ENCODE measurements at regions of chr6 and their contacts with region 1.

Region 1: GRCh38 chr6:157274471-157275226 is 48.7 kb downstream of the TMEM242 start:
- DNase-seq: peak; percentile 72 to 80
- ATAC-seq: peak; percentile 88 to 96 (median 96)
- H3K4me3 ChIP-seq: peak overlapping the region; percentile 46 to 72 (median 67)
- H3K27ac ChIP-seq: peak overlapping the region; percentile 58 to 89 (median 83)
- H3K4me1 ChIP-seq: peaks cover 0 to 37% (median 7%) of the 10 kb centered on the region in 9 donors
- H3K27me3 ChIP-seq: no peaks in the 10 kb centered on the region
- CTCF ChIP-seq: peak; percentile 55 to 95 (median 90)

Region 2: GRCh38 chr6:155314092-155314772 is 1960.4 kb before region 1 on chr6 and contains the start of gene TFB1M:
- intact Hi-C with region 1: loop called in 1 of 10 experiments (anchors 10 kb)
- DNase-seq: peak; percentile 98
- ATAC-seq: peak; percentile 99 to 100 (median 99)
- H3K4me3 ChIP-seq: peak within 1 kb of the TSS; percentile 61 to 94 (median 80)
- H3K27ac ChIP-seq: peak within 1 kb of the TSS; percentile 32 to 90 (median 84)
- H3K4me1 ChIP-seq: peaks cover 0 to 28% (median 14%) of the 10 kb centered on the region in 9 donors
- H3K27me3 ChIP-seq: no peaks in the 10 kb centered on the region
- CTCF ChIP-seq: no peak
- total RNA-seq, gene TFB1M: 12.8 to 23.1 (median 17.9) TPM

Region 3: GRCh38 chr6:156686995-156687788 is 587.5 kb before region 1 on chr6:
- intact Hi-C with region 1: loop called in 1 of 10 experiments (anchors 10 kb)
- DNase-seq: peak; percentile 90 to 91
- ATAC-seq: peak; percentile 95 to 99 (median 96)
- H3K4me3 ChIP-seq: peak overlapping the region; percentile 59 to 94 (median 72)
- H3K27ac ChIP-seq: peak overlapping the region; percentile 87 to 100 (median 98)
- H3K4me1 ChIP-seq: peaks cover 0 to 19% (median 11%) of the 10 kb centered on the region in 9 donors
- H3K27me3 ChIP-seq: no peaks in the 10 kb centered on the region
- CTCF ChIP-seq: no peak

Region 4: GRCh38 chr6:157099912-157100593 is 174.6 kb before region 1 on chr6:
- intact Hi-C with region 1: no loop called
- DNase-seq: peak in 1 of 2 donors; percentile 24
- ATAC-seq: peak in 7 of 8 donors; percentile 54 to 81 (median 72)
- H3K4me3 ChIP-seq: no peak overlapping the region
- H3K27ac ChIP-seq: peak overlapping the region in 3 of 10 donors; percentile 33 to 64 (median 44)
- H3K4me1 ChIP-seq: peaks cover 0 to 39% (median 18%) of the 10 kb centered on the region in 9 donors
- H3K27me3 ChIP-seq: no peaks in the 10 kb centered on the region
- CTCF ChIP-seq: no peak

Region 5: DNA sequence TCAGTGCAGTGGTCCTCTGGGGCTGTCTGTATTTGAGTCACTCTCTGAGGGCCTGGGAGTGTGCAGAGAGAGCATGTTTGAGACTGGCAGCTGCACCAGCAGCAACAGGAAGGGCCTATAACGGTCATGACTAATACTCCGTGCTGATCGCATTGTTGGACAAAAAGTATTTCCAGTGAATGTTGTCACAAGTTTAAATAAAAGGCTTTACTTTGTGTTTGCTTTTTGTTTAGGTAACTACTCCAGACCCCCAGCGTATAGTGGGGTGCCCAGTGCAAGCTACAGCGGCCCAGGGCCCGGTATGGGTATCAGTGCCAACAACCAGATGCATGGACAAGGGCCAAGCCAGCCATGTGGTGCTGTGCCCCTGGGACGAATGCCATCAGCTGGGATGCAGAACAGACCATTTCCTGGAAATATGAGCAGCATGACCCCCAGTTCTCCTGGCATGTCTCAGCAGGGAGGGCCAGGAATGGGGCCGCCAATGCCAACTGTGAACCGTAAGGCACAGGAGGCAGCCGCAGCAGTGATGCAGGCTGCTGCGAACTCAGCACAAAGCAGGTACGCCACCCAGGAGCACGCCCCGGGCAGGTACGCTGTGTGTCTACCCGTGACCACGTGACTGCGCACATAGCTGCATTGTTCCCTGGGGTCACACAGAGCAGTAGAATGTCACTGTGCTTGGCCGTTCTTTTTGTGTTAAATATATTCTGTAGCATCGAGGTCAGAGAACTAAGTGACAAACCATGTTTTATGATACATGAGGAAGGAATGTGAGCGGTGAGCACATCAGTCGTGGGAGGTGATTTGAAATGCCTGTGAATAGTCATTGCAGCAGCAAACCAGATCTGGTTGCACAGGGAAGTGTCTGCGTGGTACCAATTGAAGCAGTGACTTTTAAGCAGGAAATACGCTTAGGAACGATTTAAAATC is 126.0 kb before region 1 on chr6:
- intact Hi-C with region 1: loop called in 1 of 10 experiments (anchors 10 kb)
- DNase-seq: peak; percentile 59 to 82
- ATAC-seq: peak; percentile 63 to 90 (median 79)
- H3K4me3 ChIP-seq: no peak overlapping the region
- H3K27ac ChIP-seq: peak overlapping the region in 9 of 10 donors; percentile 30 to 78 (median 59)
- H3K4me1 ChIP-seq: peaks cover 25 to 77% (median 68%) of the 10 kb centered on the region in 9 donors
- H3K27me3 ChIP-seq: no peaks in the 10 kb centered on the region
- CTCF ChIP-seq: no peak

Region 6: DNA sequence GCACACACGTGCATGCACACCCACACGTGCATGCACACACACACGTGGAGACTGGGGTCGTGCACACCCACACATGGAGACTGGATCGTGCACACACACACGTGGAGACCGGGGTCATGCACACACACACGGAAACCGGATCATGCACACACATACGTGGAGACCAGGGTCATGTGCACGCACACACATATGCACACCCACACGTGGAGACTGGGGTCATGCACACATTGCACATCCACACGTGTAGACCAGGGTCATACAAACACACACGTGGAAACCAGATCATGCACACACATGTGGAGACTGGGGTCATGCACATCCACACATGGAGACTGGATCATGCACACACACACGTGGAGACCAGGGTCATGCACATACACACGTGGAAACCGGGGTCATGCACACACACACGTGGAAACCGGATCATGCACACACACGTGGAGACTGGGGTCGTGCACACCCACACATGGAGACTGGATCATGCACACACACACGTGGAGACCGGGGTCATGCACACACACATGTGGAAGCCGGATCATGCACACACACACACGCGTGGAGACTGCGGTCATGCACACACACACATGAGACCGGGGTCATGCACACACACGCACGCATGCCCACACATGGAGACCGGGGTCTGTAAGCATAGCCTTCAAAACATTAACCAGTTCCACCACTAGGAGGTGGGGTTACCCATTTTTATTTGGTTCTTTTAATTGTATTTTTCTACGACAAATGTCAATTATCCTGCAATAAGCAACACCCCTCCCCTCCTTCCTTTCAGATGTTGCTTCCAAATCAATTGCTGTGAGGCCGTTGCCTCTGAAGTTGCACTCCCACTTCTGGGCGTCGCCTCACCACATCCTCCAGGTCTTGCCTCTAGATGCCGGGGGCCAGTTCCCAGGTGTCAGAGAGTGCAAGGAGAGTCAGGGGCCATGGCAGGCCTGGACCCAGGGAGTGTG is 47.2 kb before region 1 on chr6:
- intact Hi-C with region 1: loop called in 7 of 10 experiments (anchors 2 to 10 kb)
- DNase-seq: no peak
- ATAC-seq: peak in 3 of 8 donors; percentile 13 to 33 (median 16)
- H3K4me3 ChIP-seq: no peak overlapping the region
- H3K27ac ChIP-seq: peak overlapping the region in 3 of 10 donors; percentile 19 to 67 (median 34)
- H3K4me1 ChIP-seq: peaks cover 0 to 37% (median 13%) of the 10 kb centered on the region in 9 donors
- H3K27me3 ChIP-seq: no peaks in the 10 kb centered on the region
- CTCF ChIP-seq: peak in 8 of 9 donors; percentile 8 to 52 (median 37)

Region 7: DNA sequence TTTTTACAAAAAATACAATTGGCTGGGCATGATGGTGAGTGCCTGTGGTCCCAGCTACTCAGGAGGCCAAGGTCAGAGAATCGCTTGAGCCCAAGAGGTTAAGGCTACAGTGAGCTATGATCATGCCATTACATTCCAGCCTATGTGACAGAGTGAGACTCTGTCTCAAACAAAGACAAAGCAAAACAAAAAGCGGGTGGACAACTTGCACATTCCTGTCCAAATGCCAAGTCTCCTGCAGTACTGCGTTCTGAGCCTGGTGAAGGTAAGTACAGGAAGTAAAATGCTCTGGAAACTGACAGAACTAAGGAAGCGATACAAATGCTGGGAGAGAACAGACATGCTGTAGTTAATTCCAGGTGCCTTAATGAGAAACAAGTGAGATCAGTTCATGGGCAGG is 69.1 kb after region 1 on chr6:
- intact Hi-C with region 1: no loop called
- DNase-seq: no peak
- ATAC-seq: no peak
- H3K4me3 ChIP-seq: no peak overlapping the region
- H3K27ac ChIP-seq: no peak overlapping the region
- H3K4me1 ChIP-seq: no peaks in the 10 kb centered on the region
- H3K27me3 ChIP-seq: no peaks in the 10 kb centered on the region
- CTCF ChIP-seq: no peak

Region 8: GRCh38 chr6:157479464-157480303 is 205.0 kb after region 1 on chr6:
- intact Hi-C with region 1: no loop called
- DNase-seq: no peak
- ATAC-seq: no peak
- H3K4me3 ChIP-seq: no peak overlapping the region
- H3K27ac ChIP-seq: no peak overlapping the region
- H3K4me1 ChIP-seq: no peaks in the 10 kb centered on the region
- H3K27me3 ChIP-seq: no peaks in the 10 kb centered on the region
- CTCF ChIP-seq: no peak